AG04450 (cell line): ENCODE measurements at regions of chr19 and their contacts with region 1.

Region 1: DNA sequence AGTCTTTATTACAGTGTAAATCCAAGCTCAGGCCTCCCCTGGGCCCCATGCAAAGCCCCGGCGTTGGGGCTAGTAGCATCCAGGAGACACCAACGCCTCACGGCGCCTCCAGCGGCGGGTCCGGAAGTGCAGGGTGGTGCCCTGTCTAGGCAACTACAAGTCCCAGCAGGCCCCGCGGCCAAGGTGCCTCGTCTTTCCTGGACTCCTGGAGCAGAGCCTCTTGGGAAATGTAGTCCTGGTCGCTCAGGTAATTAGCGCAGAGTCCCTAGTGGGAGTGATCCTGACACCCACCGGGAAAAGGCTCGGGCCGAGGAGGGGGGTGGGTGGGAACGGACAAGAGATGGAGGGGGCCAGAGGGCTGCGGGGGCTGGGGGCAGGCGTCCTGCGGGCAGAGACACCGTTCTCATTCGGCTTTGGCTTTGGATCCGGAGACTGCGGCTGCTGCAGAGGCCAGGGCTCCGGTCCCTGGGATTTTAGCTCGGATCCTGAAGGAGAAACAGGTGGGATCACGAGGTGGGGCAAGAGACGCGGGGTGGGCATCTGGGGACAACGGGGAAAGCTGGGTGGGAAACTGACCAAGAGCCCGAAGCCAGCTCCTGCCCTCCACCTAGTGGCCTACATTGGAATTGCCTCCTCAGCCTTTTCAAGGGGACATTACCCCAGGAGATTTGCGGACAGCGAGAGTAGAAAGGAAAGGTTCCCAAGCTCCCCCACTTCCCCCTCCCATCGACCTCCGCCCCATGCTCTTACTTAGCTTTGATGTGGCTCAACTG is 11.4 kb downstream of the RTN2 start:
- DNase-seq: peak; percentile 89
- H3K4me3 ChIP-seq: peak overlapping the region; percentile 81
- H3K27ac ChIP-seq: no peak overlapping the region
- H3K27me3 ChIP-seq: no peaks in the 10 kb centered on the region
- CTCF ChIP-seq: peak; percentile 92

Region 2: GRCh38 chr19:45323671-45324081 is 161.8 kb before region 1 on chr19:
- CTCF ChIA-PET with region 1: no interaction called
- POLR2A ChIA-PET with region 1: no interaction called
- DNase-seq: no peak
- H3K4me3 ChIP-seq: peak overlapping the region; percentile 41
- H3K27ac ChIP-seq: no peak overlapping the region
- H3K27me3 ChIP-seq: peaks cover 24% of the 10 kb centered on the region
- CTCF ChIP-seq: no peak

Region 3: GRCh38 chr19:45352914-45353796 is 132.3 kb before region 1 on chr19:
- CTCF ChIA-PET with region 1: no interaction called
- POLR2A ChIA-PET with region 1: no interaction called
- DNase-seq: no peak
- H3K4me3 ChIP-seq: no peak overlapping the region
- H3K27ac ChIP-seq: no peak overlapping the region
- H3K27me3 ChIP-seq: no peaks in the 10 kb centered on the region
- CTCF ChIP-seq: no peak

Region 4: GRCh38 chr19:45423589-45424190 is 61.8 kb before region 1 on chr19 and contains the start of gene ERCC1:
- CTCF ChIA-PET with region 1: interaction called, 17 read pairs
- POLR2A ChIA-PET with region 1: no interaction called
- DNase-seq: peak; percentile 81
- H3K4me3 ChIP-seq: peak within 1 kb of the TSS; percentile 85
- H3K27ac ChIP-seq: peak within 1 kb of the TSS; percentile 99
- H3K27me3 ChIP-seq: no peaks in the 10 kb centered on the region
- CTCF ChIP-seq: no peak
- polyA plus RNA-seq, gene ERCC1: 75.8 and 113 TPM in 2 replicates

Region 5: GRCh38 chr19:45439569-45440254 is 45.8 kb before region 1 on chr19:
- CTCF ChIA-PET with region 1: interaction called, 224 read pairs
- POLR2A ChIA-PET with region 1: interaction called, 30 read pairs
- DNase-seq: no peak
- H3K4me3 ChIP-seq: peak overlapping the region; percentile 62
- H3K27ac ChIP-seq: no peak overlapping the region
- H3K27me3 ChIP-seq: no peaks in the 10 kb centered on the region
- CTCF ChIP-seq: peak; percentile 96

Region 6: GRCh38 chr19:45469132-45469944 is 16.2 kb before region 1 on chr19:
- CTCF ChIA-PET with region 1: interaction called, 12 read pairs
- POLR2A ChIA-PET with region 1: no interaction called
- DNase-seq: peak; percentile 84
- H3K4me3 ChIP-seq: peak overlapping the region; percentile 96
- H3K27ac ChIP-seq: peak overlapping the region; percentile 94
- H3K27me3 ChIP-seq: no peaks in the 10 kb centered on the region
- CTCF ChIP-seq: no peak

Region 7: DNA sequence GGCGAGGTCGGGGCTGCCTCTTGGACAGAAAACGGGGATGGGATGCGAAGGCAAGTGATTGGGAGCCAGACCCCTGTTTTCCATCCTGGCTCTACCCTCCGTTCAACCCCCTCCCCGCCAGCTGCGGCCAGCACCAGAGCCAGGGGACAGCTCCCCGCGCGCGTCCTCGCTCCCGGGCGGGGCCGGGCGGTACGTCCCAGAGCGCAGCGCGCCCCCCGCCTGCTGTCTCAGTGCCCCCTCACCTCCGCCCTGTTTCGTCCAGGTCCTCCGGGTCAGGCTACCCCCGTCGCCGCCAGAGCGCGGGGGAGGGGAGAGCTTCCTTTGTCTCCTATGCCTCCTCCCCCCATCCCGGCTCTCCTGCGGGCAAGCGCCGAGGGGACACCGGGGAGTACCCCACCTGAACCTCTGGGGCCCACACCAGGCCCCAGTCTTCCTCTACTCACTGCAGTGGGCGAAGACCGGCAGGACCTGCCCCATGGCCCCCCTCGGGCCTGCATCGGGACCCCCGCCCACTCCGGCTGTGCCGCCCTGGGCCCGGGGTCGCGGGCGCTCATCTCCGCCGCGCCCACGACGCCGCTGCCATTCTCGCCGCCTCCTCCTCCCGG is 11.0 kb after region 1 on chr19:
- CTCF ChIA-PET with region 1: interaction called, 54 read pairs
- POLR2A ChIA-PET with region 1: interaction called, 7 read pairs
- DNase-seq: no peak
- H3K4me3 ChIP-seq: peak overlapping the region; percentile 74
- H3K27ac ChIP-seq: no peak overlapping the region
- H3K27me3 ChIP-seq: peaks cover 4% of the 10 kb centered on the region
- CTCF ChIP-seq: no peak

Region 8: DNA sequence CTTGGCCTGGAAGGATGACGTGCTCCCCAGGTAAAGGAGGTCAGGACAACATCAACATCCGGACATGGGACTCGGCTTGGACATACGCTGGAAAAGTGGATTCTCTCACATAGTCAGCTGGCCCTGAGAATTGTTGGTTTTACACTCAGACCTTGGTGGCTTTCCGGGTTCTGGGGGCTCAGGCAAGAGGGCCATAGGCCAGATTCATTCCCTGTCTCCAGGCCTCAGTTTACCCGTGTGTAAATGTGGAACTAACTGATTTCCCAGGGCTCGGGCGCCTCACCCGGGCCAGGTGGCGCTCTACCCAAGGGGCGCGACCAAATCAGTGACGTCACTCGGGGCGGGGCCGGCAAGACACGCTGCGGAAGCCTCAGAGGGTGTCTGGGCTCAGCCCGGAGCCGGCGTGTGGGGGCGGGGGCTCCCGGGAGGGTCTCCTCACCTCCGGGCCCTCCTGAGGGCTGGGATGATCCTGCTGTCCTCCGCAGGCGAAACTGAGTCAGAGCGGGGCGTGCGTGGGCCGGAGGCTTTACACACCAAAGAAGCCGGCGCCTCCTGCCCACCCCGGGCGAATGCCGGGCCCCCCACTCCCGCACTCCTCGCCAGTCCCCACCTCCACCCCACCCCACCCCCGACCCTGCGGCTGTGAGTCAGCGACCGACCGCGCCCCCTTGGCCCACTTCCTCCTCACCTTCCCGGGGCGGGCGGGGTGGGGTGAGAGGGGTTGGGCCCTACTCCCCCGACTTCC is 20.9 kb after region 1 on chr19:
- CTCF ChIA-PET with region 1: interaction called, 13 read pairs
- POLR2A ChIA-PET with region 1: no interaction called
- DNase-seq: peak; percentile 66
- H3K4me3 ChIP-seq: peak overlapping the region; percentile 95
- H3K27ac ChIP-seq: peak overlapping the region; percentile 87
- H3K27me3 ChIP-seq: no peaks in the 10 kb centered on the region
- CTCF ChIP-seq: peak; percentile 56

Region 9: GRCh38 chr19:45643024-45643926 is 157.8 kb after region 1 on chr19:
- CTCF ChIA-PET with region 1: interaction called, 25 read pairs
- POLR2A ChIA-PET with region 1: no interaction called
- DNase-seq: peak; percentile 49
- H3K4me3 ChIP-seq: peak overlapping the region; percentile 37
- H3K27ac ChIP-seq: no peak overlapping the region
- H3K27me3 ChIP-seq: no peaks in the 10 kb centered on the region
- CTCF ChIP-seq: peak; percentile 99